AG04449 (cell line): ENCODE measurements at regions of chr10 and their contacts with region 1.

Region 1: DNA sequence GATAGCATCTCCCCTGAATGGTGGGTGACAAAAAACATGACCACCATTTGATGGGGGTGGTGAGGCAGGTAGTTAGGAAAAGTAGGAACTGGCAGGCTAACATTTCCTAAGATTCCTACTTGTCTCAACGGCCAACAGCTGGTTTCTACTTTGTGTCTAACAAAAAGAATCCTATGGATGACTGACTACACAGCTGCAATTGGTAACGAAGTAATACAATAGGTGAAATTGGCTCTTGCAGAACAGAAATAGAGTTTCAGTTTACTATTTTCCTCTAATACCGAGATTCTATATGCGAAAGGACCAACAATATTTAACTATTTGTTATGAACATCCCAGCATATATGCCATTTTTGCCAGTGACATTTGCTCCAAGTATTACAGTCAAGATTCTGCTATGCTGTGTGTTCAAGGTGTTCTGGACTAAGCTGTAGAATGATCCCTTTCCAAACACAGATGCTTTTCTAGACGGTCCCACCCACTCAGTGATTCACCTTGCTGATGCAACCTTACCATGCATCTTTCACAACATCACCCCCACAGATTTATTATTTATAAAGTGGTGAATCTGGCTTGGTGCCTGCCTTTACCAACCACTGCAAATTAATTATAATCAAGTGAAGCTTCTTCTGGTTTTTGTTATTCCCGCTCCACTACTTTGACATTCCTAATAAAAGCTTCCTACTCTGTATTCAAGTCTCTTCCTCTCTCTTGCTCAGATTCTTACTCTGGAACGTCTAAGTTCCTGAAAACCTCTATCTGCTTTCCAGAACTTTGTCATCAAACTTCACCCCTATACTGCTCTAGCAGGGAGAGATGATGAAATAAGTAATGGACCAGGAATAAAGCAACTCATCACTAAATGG is 16.8 kb downstream of the BBIP1 start:
- DNase-seq: no peak
- H3K4me3 ChIP-seq: no peak overlapping the region
- CTCF ChIP-seq: no peak

Region 2: GRCh38 chr10:110885932-110886674 is 16.1 kb before region 1 on chr10:
- CTCF ChIA-PET with region 1: interaction called, 15 read pairs
- POLR2A ChIA-PET with region 1: no interaction called
- DNase-seq: no peak
- H3K4me3 ChIP-seq: no peak overlapping the region
- CTCF ChIP-seq: no peak

Region 3: DNA sequence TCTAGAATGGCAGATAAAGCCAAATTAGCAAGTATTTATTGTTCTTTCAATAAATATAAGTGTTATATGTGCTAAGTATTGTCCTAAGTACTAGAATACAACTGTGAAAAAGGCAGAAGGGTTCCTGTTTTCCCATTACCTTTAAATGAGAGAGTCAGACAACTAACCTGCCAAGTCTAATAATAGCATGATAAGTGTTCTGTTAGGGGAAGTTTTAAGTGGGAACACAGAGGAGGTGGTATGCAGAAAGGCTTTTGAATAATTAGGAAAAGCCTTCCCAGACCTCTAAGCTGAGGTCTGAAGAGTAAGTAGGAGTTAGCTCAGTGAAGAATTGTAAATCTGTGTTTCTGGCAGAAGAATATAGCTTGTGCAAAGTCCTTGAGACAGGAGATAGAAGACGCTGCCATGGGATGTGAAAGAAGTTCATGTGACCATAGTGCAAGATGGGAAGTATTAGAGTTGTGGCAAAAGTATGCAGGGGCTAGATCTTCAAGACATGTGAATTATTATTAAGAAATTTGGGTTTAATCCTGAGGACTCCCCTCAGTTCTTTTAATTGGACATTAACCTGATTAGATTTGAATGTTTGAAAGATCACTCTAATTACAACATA is 29.7 kb after region 1 on chr10:
- CTCF ChIA-PET with region 1: no interaction called
- POLR2A ChIA-PET with region 1: no interaction called
- DNase-seq: no peak
- H3K4me3 ChIP-seq: no peak overlapping the region
- CTCF ChIP-seq: no peak